ENCODE measurements at regions of chr1 and their contacts with region 1.

Region 1: GRCh38 chr1:12549460-12550349 is 68.3 kb downstream of the DHRS3 start:
- DNase-seq: no peak
- H3K4me3 ChIP-seq: peak overlapping the region; percentile 4 to 12
- H3K27ac ChIP-seq: peak overlapping the region; percentile 87
- H3K4me1 ChIP-seq: peaks cover 53% of the 10 kb centered on the region
- H3K27me3 ChIP-seq: no peaks in the 10 kb centered on the region
- CTCF ChIP-seq: no peak
- POLR2A ChIP-seq: no peak

Region 2: GRCh38 chr1:12314333-12314903 is 235.3 kb before region 1 on chr1:
- intact Hi-C with region 1: loop called (anchors 10 kb)
- DNase-seq: no peak
- H3K4me3 ChIP-seq: no peak overlapping the region
- H3K27ac ChIP-seq: peak overlapping the region; percentile 62
- H3K4me1 ChIP-seq: peaks cover 27% of the 10 kb centered on the region
- H3K27me3 ChIP-seq: no peaks in the 10 kb centered on the region
- CTCF ChIP-seq: peak in 1 of 3 experiments; percentile 41
- POLR2A ChIP-seq: no peak

Region 3: DNA sequence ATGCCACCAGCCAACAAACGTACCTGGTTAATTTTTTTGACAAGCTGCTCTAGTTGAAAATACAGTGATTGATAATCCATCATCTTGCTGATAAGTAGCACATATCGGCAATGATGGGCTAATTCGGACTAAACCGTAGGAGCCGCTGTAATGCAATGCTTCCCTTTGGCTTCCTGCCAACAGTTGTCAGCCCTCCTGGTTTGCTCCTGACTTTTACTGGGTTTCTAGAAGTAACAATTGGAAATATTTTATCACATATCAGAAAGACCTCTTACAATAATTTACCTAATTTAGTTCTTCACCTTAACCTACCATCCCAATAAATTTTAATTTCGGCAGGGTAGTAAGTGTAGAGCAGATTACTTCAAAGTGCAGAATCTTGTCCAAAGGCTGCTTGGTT is 80.2 kb before region 1 on chr1:
- intact Hi-C with region 1: no loop called
- DNase-seq: no peak
- H3K4me3 ChIP-seq: no peak overlapping the region
- H3K27ac ChIP-seq: no peak overlapping the region
- H3K4me1 ChIP-seq: peaks cover 42% of the 10 kb centered on the region
- H3K27me3 ChIP-seq: no peaks in the 10 kb centered on the region
- CTCF ChIP-seq: no peak
- POLR2A ChIP-seq: no peak

Region 4: DNA sequence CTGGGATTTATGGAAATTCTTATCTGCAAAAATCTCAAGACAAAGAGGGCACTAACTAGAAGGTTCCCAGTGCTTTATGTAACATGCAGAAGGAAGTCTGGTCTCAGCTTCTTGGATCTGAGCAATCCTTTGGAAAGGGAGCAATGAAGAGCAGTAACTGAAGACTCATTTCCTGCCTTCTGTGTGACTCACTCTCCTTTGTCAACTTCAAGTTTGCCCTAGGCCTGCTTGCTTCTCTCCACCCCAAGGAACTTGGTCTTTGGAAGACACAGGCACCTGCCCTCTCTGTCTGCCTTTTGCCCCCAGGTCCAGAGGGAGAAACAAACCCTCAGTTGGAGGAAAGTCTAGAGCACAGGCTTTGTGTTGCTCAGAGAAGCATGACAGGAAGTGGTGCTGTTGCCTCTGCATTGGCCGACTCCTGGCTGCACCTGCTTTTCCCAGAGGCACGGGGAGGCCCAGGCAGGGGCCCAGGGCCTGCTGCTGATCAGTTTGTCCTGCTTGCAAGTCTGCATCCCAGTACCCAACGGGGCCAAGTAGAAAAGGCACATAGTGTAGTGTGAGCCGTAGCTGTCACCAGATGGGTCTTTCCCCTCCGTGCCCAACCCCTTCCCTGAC is 68.8 kb before region 1 on chr1:
- intact Hi-C with region 1: loop called (anchors 10 kb)
- DNase-seq: no peak
- H3K4me3 ChIP-seq: no peak overlapping the region
- H3K27ac ChIP-seq: peak overlapping the region; percentile 76
- H3K4me1 ChIP-seq: peaks cover 78% of the 10 kb centered on the region
- H3K27me3 ChIP-seq: no peaks in the 10 kb centered on the region
- CTCF ChIP-seq: no peak
- POLR2A ChIP-seq: no peak

Region 5: GRCh38 chr1:12566484-12567287 is 17.0 kb after region 1 on chr1:
- intact Hi-C with region 1: loop called (anchors 1 kb)
- DNase-seq: no peak
- H3K4me3 ChIP-seq: no peak overlapping the region
- H3K27ac ChIP-seq: no peak overlapping the region
- H3K4me1 ChIP-seq: peaks cover 13% of the 10 kb centered on the region
- H3K27me3 ChIP-seq: no peaks in the 10 kb centered on the region
- CTCF ChIP-seq: no peak
- POLR2A ChIP-seq: no peak

Measured in vagina (tissue), 2 donors.